B cell (primary cell): ENCODE measurements at regions of chr3 and their contacts with region 1.

Region 1: GRCh38 chr3:145857956-145858355 is 303.0 kb downstream of the PLOD2 start:
- DNase-seq: no peak
- ATAC-seq: no peak
- H3K4me3 ChIP-seq: no peak overlapping the region
- H3K4me3 Mint-ChIP-seq: no peak overlapping the region
- H3K27ac ChIP-seq: no peak overlapping the region
- H3K27ac Mint-ChIP-seq: no peak overlapping the region
- H3K4me1 ChIP-seq: no peaks in the 10 kb centered on the region
- H3K4me1 Mint-ChIP-seq: no peaks in the 10 kb centered on the region
- H3K27me3 ChIP-seq: no peaks in the 10 kb centered on the region
- H3K27me3 Mint-ChIP-seq: no peaks in the 10 kb centered on the region
- CTCF ChIP-seq: no peak

Region 2: GRCh38 chr3:145911016-145911415 is 53.1 kb after region 1 on chr3:
- CTCF ChIA-PET with region 1: no interaction called
- POLR2A ChIA-PET with region 1: no interaction called
- intact Hi-C with region 1: loop called (anchors 2 kb)
- DNase-seq: no peak
- ATAC-seq: no peak
- H3K4me3 ChIP-seq: no peak overlapping the region
- H3K4me3 Mint-ChIP-seq: no peak overlapping the region
- H3K27ac ChIP-seq: no peak overlapping the region
- H3K27ac Mint-ChIP-seq: no peak overlapping the region
- H3K4me1 ChIP-seq: no peaks in the 10 kb centered on the region
- H3K4me1 Mint-ChIP-seq: no peaks in the 10 kb centered on the region
- H3K27me3 ChIP-seq: no peaks in the 10 kb centered on the region
- H3K27me3 Mint-ChIP-seq: no peaks in the 10 kb centered on the region
- CTCF ChIP-seq: no peak

Region 3: GRCh38 chr3:145959457-145960088 is 101.6 kb after region 1 on chr3:
- CTCF ChIA-PET with region 1: no interaction called
- POLR2A ChIA-PET with region 1: no interaction called
- intact Hi-C with region 1: no loop called
- DNase-seq: no peak
- ATAC-seq: no peak
- H3K4me3 ChIP-seq: no peak overlapping the region
- H3K4me3 Mint-ChIP-seq: no peak overlapping the region
- H3K27ac ChIP-seq: no peak overlapping the region
- H3K27ac Mint-ChIP-seq: no peak overlapping the region
- H3K4me1 ChIP-seq: no peaks in the 10 kb centered on the region
- H3K4me1 Mint-ChIP-seq: no peaks in the 10 kb centered on the region
- H3K27me3 ChIP-seq: no peaks in the 10 kb centered on the region
- H3K27me3 Mint-ChIP-seq: no peaks in the 10 kb centered on the region
- CTCF ChIP-seq: no peak